ENCODE measurements at regions of chr14 and their contacts with region 1.

Region 1: GRCh38 chr14:61965030-61965745 is 203.0 kb downstream of the SNAPC1 start:
- DNase-seq: peak; percentile 25 to 85
- H3K4me3 ChIP-seq: no peak overlapping the region
- H3K27ac ChIP-seq: peak overlapping the region; percentile 21; the same call in 1 of the 2 replicates
- H3K4me1 ChIP-seq: peaks cover 17% of the 10 kb centered on the region
- H3K27me3 ChIP-seq: no peaks in the 10 kb centered on the region
- CTCF ChIP-seq: no peak

Region 2: GRCh38 chr14:61925043-61925442 is 40.1 kb before region 1 on chr14:
- CTCF ChIA-PET with region 1: no interaction called
- POLR2A ChIA-PET with region 1: no interaction called
- intact Hi-C with region 1: loop called (anchors 2 kb)
- DNase-seq: no peak
- H3K4me3 ChIP-seq: no peak overlapping the region
- H3K27ac ChIP-seq: no peak overlapping the region
- H3K4me1 ChIP-seq: peaks cover 47% of the 10 kb centered on the region
- H3K27me3 ChIP-seq: no peaks in the 10 kb centered on the region
- CTCF ChIP-seq: no peak

Region 3: GRCh38 chr14:62743560-62743959 is 778.4 kb after region 1 on chr14:
- CTCF ChIA-PET with region 1: no interaction called
- POLR2A ChIA-PET with region 1: interaction called, 10 read pairs
- intact Hi-C with region 1: no loop called
- DNase-seq: no peak
- H3K4me3 ChIP-seq: no peak overlapping the region
- H3K27ac ChIP-seq: no peak overlapping the region
- H3K4me1 ChIP-seq: no peaks in the 10 kb centered on the region
- H3K27me3 ChIP-seq: no peaks in the 10 kb centered on the region
- CTCF ChIP-seq: no peak

Measured in PC-9 (cell line).